Activated T-helper 2 cell treated with anti-CD3 and anti-CD28 coated beads, Interferon-gamma antibody, Interleukin-2, Interleukin-4, amounts not matched to agents 10 μg/mL and 5 μg/mL and 100 μg/mL, durations not matched to agents 14 hours and 24 hours and 36 hours (primary cell): ENCODE measurements at regions of chr4 and their contacts with region 1.

Region 1: DNA sequence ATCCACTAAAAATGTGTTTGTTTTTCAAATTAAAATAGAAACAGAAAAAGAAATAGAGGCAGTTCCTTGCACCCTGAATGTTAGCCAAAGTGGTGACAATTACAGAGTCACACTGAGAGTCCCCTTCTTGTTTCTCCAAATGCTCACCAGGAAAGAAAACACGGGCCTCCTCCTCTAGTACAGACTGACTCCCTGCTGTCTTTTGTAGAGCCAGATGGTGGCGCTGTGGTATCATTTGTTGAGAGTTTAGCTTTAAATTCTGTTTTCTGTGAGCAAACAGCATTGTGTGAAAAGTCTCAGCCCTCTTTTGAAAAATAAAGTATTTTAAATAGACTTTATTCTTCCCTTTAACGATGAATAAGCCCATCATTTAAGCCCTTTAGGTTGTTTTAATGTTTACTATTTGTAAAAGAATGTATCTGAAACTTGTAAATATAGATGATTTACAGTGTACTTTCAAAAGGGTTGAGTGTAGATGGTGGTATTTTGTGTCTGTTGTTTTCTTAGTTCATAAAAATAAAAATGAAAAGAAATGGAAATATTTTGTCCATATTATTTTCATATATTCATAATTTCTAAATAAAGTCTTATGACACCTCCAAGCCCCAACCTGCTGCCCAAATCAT is 36.9 kb upstream of the ATOH1 start:
- DNase-seq: peak; percentile 13
- H3K4me3 Mint-ChIP-seq: no peak overlapping the region
- H3K27ac Mint-ChIP-seq: no peak overlapping the region
- H3K4me1 Mint-ChIP-seq: no peaks in the 10 kb centered on the region
- H3K27me3 Mint-ChIP-seq: peaks cover 2% of the 10 kb centered on the region

Region 2: GRCh38 chr4:93066749-93067148 is 724.9 kb before region 1 on chr4:
- intact Hi-C with region 1: no loop called
- DNase-seq: no peak
- H3K4me3 Mint-ChIP-seq: no peak overlapping the region
- H3K27ac Mint-ChIP-seq: no peak overlapping the region
- H3K4me1 Mint-ChIP-seq: no peaks in the 10 kb centered on the region
- H3K27me3 Mint-ChIP-seq: no peaks in the 10 kb centered on the region

Region 3: DNA sequence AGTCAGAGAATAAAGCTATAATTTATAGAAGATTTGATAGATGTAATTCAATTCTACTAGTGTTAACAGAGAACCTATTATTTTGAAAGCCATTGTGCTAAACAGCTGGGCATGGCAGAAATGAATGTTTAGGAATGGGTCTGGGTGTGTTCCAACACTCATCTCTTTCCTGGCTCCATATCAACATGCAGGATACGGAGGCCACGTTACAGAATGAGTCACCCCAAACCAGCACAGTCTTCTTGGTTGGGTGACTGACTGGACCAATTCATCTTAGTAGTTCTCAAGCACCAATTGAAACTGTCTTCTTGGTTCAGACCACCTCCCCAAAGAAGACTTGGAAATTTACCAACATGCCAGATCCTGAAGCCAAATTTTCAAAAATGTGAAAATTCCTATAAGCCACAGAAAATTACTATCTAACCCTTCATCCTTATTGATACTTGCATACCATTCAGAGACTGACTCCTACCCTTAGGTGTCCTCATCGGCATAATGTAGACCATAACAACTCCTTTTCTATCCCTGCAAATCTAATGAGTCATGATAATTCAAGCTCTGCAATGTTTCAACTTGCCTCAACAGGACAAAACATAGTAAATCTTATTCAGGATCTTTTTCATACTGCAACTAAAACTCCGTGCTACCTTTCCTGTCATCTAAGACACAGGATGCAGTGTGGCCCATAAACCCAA is 15.2 kb before region 1 on chr4:
- intact Hi-C with region 1: no loop called
- DNase-seq: no peak
- H3K4me3 Mint-ChIP-seq: no peak overlapping the region
- H3K27ac Mint-ChIP-seq: no peak overlapping the region
- H3K4me1 Mint-ChIP-seq: no peaks in the 10 kb centered on the region
- H3K27me3 Mint-ChIP-seq: no peaks in the 10 kb centered on the region

Region 4: DNA sequence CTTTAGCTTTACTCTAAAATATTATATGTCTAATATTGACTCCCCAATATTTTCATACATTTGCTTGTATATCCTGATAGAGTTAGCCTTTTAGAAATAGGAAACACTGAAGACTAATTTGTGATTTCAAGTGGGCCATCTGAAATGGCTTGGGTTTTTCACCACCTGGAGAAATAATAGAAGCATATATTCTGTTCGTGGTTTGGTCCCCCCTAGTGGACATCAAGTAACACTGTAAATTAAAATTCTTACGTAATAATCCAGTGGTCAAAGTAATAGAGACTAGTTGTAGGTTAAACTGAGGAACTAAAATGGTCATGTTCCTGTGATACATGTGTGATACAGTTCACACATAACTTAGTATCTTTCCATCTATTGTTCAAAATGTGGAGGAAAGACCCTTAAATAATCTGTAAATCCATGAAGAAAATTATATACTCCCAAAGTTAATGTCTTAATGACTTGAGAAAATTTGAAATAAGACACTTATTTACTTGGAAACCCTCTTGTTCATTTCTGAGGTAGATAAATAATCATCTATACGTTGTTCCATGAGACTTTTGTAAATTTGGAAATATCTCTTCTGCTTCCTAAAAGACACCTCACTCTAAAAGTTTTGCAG is 336.1 kb after region 1 on chr4:
- intact Hi-C with region 1: loop called (anchors 5 kb)
- DNase-seq: no peak
- H3K4me3 Mint-ChIP-seq: no peak overlapping the region
- H3K27ac Mint-ChIP-seq: no peak overlapping the region
- H3K4me1 Mint-ChIP-seq: no peaks in the 10 kb centered on the region
- H3K27me3 Mint-ChIP-seq: peaks cover 2% of the 10 kb centered on the region

Region 5: DNA sequence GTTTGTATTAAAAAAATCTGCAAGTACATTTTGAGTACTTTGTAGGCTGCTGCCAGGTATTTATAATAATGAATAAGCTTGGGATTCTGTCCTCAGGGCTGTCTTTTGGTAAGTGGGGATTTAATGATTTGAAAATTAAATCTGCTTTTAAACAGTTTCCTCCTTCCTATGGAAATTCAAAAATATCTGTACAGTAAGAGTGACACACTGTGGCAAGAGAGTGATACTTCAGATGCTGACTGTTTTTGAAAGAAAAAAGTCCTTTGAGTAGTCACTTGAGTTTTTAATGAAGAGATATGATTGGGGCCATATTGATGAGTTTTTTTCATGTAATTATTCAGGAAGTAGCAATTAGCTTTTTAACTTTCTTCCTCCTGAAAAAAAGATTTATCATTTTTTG is 465.1 kb after region 1 on chr4:
- intact Hi-C with region 1: loop called (anchors 5 kb)
- DNase-seq: no peak
- H3K4me3 Mint-ChIP-seq: no peak overlapping the region
- H3K27ac Mint-ChIP-seq: no peak overlapping the region
- H3K4me1 Mint-ChIP-seq: peaks cover 4% of the 10 kb centered on the region
- H3K27me3 Mint-ChIP-seq: no peaks in the 10 kb centered on the region

Region 6: GRCh38 chr4:94390804-94391410 is 599.2 kb after region 1 on chr4:
- intact Hi-C with region 1: loop called (anchors 5 kb)
- DNase-seq: no peak
- H3K4me3 Mint-ChIP-seq: no peak overlapping the region
- H3K27ac Mint-ChIP-seq: no peak overlapping the region
- H3K4me1 Mint-ChIP-seq: peaks cover 4% of the 10 kb centered on the region
- H3K27me3 Mint-ChIP-seq: peaks cover 27% of the 10 kb centered on the region

Region 7: GRCh38 chr4:94595879-94596483 is 804.3 kb after region 1 on chr4:
- intact Hi-C with region 1: loop called (anchors 10 kb)
- DNase-seq: no peak
- H3K4me3 Mint-ChIP-seq: no peak overlapping the region
- H3K27ac Mint-ChIP-seq: no peak overlapping the region
- H3K4me1 Mint-ChIP-seq: no peaks in the 10 kb centered on the region
- H3K27me3 Mint-ChIP-seq: no peaks in the 10 kb centered on the region